Activated naive CD4-positive, alpha-beta T cell treated with anti-CD3 and anti-CD28 coated beads, Interleukin-2, amount 10 ng/mL, durations not matched to agents 7 days and 5 days (primary cell): ENCODE measurements at regions of chr5 and their contacts with region 1.

Region 1: GRCh38 chr5:39217365-39218281 is 1.7 kb downstream of the FYB1 start:
- DNase-seq: peak; percentile 85
- H3K4me3 Mint-ChIP-seq: peak overlapping the region; percentile 68
- H3K27ac Mint-ChIP-seq: peak overlapping the region; percentile 85
- H3K4me1 Mint-ChIP-seq: peaks cover 65% of the 10 kb centered on the region
- H3K27me3 Mint-ChIP-seq: no peaks in the 10 kb centered on the region

Region 2: GRCh38 chr5:39164529-39165402 is 52.9 kb before region 1 on chr5:
- CTCF ChIA-PET with region 1: interaction called, 10 read pairs
- DNase-seq: no peak
- H3K4me3 Mint-ChIP-seq: peak overlapping the region; percentile 52
- H3K27ac Mint-ChIP-seq: peak overlapping the region; percentile 91
- H3K4me1 Mint-ChIP-seq: peaks cover 86% of the 10 kb centered on the region
- H3K27me3 Mint-ChIP-seq: no peaks in the 10 kb centered on the region

Region 3: DNA sequence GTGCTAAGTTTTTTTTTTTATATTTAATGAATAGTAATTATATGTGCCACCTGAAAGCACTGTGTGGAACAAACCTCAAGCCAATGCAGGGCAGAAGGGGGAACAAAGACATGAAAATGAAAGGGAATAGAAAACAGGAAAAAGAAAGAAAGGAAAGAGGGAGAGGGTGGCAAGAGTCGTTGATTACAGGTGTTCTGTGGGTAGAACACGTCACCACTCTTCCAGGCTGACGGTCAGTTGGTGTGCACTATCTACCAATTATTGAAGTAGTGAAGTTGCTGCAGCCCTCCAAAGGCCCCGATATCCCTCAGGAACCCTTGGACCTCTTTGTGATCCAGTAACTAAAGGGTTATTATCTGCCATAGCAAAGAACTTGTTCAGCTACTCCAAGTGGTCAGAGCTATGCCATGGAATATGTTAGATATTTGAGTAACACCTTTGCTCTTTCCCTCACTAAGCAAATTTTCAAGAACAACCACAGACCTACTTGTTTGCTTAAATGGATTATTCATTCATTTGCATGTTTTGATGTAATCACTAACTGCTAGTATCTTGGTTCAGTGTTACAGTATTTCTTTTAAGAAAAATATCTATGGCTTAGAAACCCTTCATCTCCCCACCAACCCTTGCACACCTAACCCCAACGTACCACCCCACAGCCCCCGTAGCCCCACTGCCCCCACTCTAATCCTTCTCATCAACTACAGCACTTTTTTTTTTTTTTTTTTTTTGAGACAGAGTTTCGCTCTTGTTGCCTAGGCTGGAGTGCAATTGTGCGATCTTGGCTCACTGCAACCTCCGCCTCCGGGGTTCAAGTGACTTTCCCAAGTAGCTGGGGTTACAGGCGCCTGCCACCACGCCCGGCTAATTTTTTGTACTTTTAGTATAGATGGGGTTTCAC is 29.5 kb before region 1 on chr5:
- CTCF ChIA-PET with region 1: interaction called, 53 read pairs
- DNase-seq: peak; percentile 42
- H3K4me3 Mint-ChIP-seq: peak overlapping the region; percentile 62
- H3K27ac Mint-ChIP-seq: peak overlapping the region; percentile 91
- H3K4me1 Mint-ChIP-seq: peaks cover 89% of the 10 kb centered on the region
- H3K27me3 Mint-ChIP-seq: no peaks in the 10 kb centered on the region

Region 4: DNA sequence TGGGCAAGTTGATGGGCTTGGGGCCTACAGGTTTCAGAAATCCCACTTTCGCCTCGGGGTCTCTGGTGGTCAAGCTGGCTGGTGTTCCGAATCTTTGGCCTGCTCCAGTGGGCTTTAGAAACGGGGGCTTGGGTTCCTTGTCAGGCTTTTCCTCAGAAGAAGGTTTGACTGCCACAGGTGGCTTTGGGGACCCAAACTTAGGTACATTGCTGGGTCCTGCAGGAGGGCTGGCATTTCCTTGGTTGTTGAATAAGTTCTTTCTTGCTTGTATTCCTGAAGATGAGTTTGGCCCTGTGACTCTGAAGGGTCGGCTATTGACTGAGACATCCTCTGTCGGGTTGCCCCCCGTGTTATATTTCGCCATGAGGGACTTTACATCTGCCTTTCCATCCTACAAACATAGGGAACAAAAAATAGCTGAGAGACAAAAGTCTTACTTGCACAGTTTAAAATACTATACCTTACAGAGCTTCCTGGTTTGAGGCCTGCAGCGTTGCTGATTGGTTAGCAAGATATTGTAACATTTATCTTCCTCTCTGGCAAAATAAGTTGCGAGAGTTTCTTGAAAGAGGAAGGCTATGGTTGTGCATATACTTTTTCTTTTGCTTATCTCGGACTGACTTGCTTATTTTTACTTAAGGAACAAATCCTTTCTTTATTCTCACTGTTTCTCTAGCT is 14.9 kb before region 1 on chr5:
- CTCF ChIA-PET with region 1: interaction called, 57 read pairs
- DNase-seq: peak; percentile 66
- H3K4me3 Mint-ChIP-seq: peak overlapping the region; percentile 88
- H3K27ac Mint-ChIP-seq: peak overlapping the region; percentile 94
- H3K4me1 Mint-ChIP-seq: peaks cover 41% of the 10 kb centered on the region
- H3K27me3 Mint-ChIP-seq: no peaks in the 10 kb centered on the region

Region 5: DNA sequence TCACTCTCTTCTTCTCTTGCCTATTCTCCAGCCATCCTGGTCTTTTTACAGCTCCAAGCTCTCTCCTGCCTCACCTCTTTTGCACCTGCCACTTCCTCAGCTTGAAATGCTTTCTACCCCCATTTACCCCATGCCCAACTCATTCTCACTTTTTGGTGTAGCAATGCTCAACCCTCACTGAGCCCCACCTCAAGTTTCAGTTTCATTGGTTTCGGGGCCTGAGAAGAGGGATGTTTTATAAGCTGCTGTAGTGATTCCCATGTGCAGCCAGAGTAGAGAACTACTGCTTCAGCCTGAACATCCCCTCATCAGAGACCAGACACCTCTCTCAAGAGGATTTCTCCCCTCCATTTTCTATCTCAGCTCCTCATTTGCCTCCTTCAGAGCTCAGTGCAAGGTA is 46.9 kb after region 1 on chr5:
- CTCF ChIA-PET with region 1: interaction called, 11 read pairs
- DNase-seq: peak; percentile 64
- H3K4me3 Mint-ChIP-seq: no peak overlapping the region
- H3K27ac Mint-ChIP-seq: peak overlapping the region; percentile 45
- H3K4me1 Mint-ChIP-seq: peaks cover 39% of the 10 kb centered on the region
- H3K27me3 Mint-ChIP-seq: no peaks in the 10 kb centered on the region

Region 6: GRCh38 chr5:39283231-39283818 is 65.7 kb after region 1 on chr5:
- CTCF ChIA-PET with region 1: interaction called, 159 read pairs
- DNase-seq: peak; percentile 70
- H3K4me3 Mint-ChIP-seq: no peak overlapping the region
- H3K27ac Mint-ChIP-seq: no peak overlapping the region
- H3K4me1 Mint-ChIP-seq: peaks cover 38% of the 10 kb centered on the region
- H3K27me3 Mint-ChIP-seq: peaks cover 11% of the 10 kb centered on the region

Region 7: GRCh38 chr5:39299962-39300361 is 82.3 kb after region 1 on chr5:
- CTCF ChIA-PET with region 1: no interaction called
- DNase-seq: no peak
- H3K4me3 Mint-ChIP-seq: no peak overlapping the region
- H3K27ac Mint-ChIP-seq: no peak overlapping the region
- H3K4me1 Mint-ChIP-seq: no peaks in the 10 kb centered on the region
- H3K27me3 Mint-ChIP-seq: peaks cover 8% of the 10 kb centered on the region